Calu3 (cell line): ENCODE measurements at regions of chr12 and their contacts with region 1.

Region 1: DNA sequence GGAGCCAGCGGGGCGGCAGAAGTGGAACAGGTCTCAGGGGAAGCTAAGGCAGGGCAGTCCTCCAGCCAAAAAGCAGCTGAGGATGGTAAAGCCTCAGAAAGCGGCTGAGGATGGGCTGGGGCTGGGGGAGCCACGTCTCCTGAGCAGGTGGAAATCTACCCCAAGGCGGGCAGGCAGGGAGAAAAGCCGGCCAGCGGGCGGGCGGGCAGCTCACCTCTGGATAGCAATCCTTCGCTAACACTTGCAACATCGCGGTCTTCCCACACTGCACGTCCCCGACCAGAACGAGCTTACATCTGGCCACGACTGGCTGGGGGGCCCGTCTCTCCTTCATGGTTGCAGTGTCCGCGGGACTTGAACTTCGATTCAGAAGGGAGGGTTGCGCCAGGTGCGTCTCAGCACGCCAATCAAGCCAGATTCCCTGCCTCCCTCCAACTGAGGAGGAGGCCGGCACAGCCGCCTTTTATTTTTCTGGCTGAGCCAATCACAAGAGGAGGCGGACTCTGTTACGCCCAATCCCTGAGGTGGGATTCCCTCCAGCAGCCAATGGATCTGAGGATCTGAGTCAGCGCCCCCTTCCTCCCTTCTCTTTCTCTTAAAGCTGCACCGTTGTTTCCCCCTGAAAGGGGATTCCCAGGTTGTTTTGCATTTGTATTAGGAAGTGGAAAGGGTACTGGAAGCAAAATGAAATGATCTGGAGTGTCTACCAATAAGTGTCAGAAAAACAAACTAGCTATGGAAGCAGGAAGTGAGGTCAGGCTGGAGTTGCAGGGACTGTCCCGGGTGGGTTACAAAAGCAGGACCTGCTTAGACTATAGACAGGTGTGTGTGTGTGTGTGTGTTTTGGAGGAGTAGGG is at the start of gene RND1:
- DNase-seq: peak; percentile 86
- H3K4me3 Mint-ChIP-seq: peak within 1 kb of the TSS; percentile 85
- H3K27ac Mint-ChIP-seq: peak within 1 kb of the TSS; percentile 95
- H3K4me1 Mint-ChIP-seq: peaks cover 40% of the 10 kb centered on the region
- H3K27me3 Mint-ChIP-seq: no peaks in the 10 kb centered on the region
- CTCF ChIP-seq: no peak
- total RNA-seq, gene RND1: 7.4 and 14.2 TPM in 2 replicates

Region 2: GRCh38 chr12:48263617-48264016 is 602.0 kb before region 1 on chr12:
- CTCF ChIA-PET with region 1: no interaction called
- intact Hi-C with region 1: no loop called
- DNase-seq: no peak
- H3K4me3 Mint-ChIP-seq: no peak overlapping the region
- H3K27ac Mint-ChIP-seq: no peak overlapping the region
- H3K4me1 Mint-ChIP-seq: no peaks in the 10 kb centered on the region
- H3K27me3 Mint-ChIP-seq: no peaks in the 10 kb centered on the region
- CTCF ChIP-seq: no peak

Region 3: GRCh38 chr12:48795480-48796455 is 69.9 kb before region 1 on chr12:
- CTCF ChIA-PET with region 1: no interaction called
- intact Hi-C with region 1: no loop called
- DNase-seq: peak; percentile 60
- H3K4me3 Mint-ChIP-seq: no peak overlapping the region
- H3K27ac Mint-ChIP-seq: no peak overlapping the region
- H3K4me1 Mint-ChIP-seq: peaks cover 15% of the 10 kb centered on the region
- H3K27me3 Mint-ChIP-seq: no peaks in the 10 kb centered on the region
- CTCF ChIP-seq: peak; percentile 73

Region 4: GRCh38 chr12:48890657-48891418 is 25.2 kb after region 1 on chr12:
- CTCF ChIA-PET with region 1: interaction called, 13 read pairs
- intact Hi-C with region 1: no loop called
- DNase-seq: peak; percentile 84
- H3K4me3 Mint-ChIP-seq: no peak overlapping the region
- H3K27ac Mint-ChIP-seq: no peak overlapping the region
- H3K4me1 Mint-ChIP-seq: peaks cover 8% of the 10 kb centered on the region
- H3K27me3 Mint-ChIP-seq: peaks cover 22% of the 10 kb centered on the region
- CTCF ChIP-seq: peak; percentile 55